ENCODE measurements at regions of chr19 and their contacts with region 1.

Region 1: DNA sequence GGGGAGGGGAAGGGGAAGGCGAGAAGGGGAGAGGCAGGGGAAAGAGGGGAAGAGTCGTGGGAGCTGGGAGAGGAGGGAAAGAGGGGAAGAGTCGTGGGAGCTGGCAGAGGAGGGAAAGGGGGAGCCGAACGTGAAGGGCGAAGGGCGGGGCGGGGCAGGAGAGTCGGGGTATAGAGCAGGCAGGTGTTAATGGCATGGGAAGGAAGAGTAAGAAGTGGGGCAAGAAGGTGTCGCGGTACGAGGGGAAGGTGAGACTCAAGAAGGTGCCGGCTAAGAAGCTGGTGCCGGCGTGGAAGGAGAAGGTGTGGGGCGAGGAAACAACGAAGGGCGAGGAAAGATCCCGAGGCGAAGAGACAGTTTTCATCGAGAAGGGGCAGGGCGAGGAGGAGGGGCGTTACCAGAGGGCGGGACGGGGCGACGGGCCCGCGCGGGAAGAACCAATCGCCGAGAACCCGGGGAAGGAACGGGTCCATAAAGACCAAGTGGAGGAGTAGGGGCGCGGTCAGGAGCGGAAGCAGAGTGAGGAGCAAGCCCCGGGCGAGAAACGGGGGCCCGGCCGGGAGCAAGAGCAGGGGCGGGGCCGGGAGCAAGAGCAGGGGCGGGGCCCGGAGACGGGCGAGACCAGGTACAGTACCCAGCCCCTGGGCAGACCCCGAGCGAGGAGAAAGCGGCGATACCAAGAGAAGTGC is 463 bp downstream of the CATSPERG start:
- DNase-seq: peak; percentile 98 to 99
- ATAC-seq: peak; percentile 96
- H3K4me3 ChIP-seq: peak overlapping the region; percentile 23 to 59
- H3K27ac ChIP-seq: peak overlapping the region in 1 of 2 donors; percentile 93
- H3K4me1 ChIP-seq: no peaks in the 10 kb centered on the region
- H3K27me3 ChIP-seq: no peaks in the 10 kb centered on the region

Region 2: GRCh38 chr19:38142176-38143035 is 193.7 kb before region 1 on chr19:
- intact Hi-C with region 1: loop called in 1 of 2 experiments (anchors 5 kb)
- DNase-seq: no peak
- ATAC-seq: peak; percentile 57
- H3K4me3 ChIP-seq: no peak overlapping the region
- H3K27ac ChIP-seq: no peak overlapping the region
- H3K4me1 ChIP-seq: no peaks in the 10 kb centered on the region
- H3K27me3 ChIP-seq: no peaks in the 10 kb centered on the region

Region 3: DNA sequence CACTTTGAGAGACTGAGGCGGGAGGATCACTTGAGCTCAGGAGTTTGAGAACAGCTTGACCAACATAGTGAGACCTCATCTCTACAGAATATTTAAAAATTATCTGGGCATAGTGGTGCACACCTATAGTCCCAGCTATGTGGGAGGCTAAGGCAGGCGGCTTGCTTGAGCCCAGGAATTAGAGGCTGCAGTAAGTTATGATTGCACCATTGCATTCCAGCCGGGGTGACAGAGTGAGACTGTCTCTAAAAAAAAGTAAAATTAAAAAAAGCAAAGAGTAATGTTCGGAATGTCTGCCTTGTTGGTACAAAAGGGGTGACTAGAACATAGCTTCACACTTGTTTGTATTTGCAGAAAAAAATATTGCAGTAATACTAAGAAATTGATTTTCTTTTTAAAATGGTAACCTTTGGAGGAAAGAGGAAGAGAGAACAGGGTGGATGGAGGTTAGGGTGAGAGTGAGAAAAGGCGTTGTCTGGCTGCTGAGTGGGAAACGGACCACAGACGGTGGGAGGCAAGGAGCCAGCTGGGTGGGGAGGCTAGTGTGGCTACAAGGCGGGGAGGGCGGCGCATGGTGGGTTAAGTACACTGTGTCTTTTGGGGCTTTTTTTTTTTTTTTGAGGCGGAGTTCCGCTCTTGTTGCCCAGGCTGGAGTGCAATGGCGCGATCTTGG is 90.1 kb before region 1 on chr19:
- intact Hi-C with region 1: loop called (anchors 1 to 5 kb)
- DNase-seq: peak; percentile 82 to 93
- ATAC-seq: peak; percentile 36
- H3K4me3 ChIP-seq: no peak overlapping the region
- H3K27ac ChIP-seq: peak overlapping the region; percentile 48 to 94
- H3K4me1 ChIP-seq: peaks cover 3% of the 10 kb centered on the region in 2 donors
- H3K27me3 ChIP-seq: no peaks in the 10 kb centered on the region

Region 4: GRCh38 chr19:38277969-38278680 is 58.0 kb before region 1 on chr19:
- intact Hi-C with region 1: no loop called
- DNase-seq: peak; percentile 88 to 92
- ATAC-seq: peak; percentile 69
- H3K4me3 ChIP-seq: no peak overlapping the region
- H3K27ac ChIP-seq: peak overlapping the region; percentile 83 to 96
- H3K4me1 ChIP-seq: peaks cover 0 to 3% of the 10 kb centered on the region in 2 donors
- H3K27me3 ChIP-seq: no peaks in the 10 kb centered on the region

Region 5: DNA sequence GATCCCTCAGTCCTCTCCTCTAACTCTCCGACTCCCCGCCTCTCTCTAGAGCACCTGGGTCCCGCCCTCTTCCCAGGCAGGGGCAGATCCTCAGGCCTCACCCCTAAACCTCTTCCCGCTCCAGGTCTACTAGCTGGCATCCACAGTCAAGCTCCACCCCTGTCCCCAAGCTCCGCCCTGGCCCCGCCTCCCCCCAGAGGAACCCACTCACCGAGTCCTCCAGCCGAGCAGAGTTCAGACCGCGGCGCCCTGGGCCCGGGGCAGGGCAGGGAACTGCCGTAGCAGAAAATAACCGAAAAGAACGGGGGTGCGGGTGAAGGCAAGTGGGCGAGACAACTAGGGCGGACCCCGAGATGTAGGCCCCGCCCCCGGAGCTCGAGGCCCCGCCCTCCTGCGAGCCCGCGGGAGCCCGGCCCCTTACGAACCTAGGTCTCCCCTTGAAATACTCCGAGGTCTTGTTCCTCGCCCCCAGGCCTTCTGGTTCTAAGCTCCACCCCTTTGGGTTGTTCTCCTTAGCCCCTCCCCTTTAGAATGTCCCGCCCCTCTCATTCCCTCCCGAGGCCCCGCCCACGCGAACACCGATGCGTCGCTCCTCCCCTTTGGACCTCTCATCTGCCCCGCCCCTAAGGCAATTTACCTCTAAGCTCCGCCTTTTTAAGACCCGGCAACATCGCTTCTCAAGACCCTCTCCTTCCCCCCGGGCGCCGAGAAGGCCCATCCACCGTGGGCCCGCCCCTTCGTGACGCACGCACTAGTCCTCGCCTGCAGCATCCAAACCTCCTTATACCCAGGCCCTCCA is 51.7 kb after region 1 on chr19 and contains the start of gene GGN:
- intact Hi-C with region 1: loop called in 1 of 2 experiments (anchors 5 kb)
- DNase-seq: peak; percentile 93 to 95
- ATAC-seq: peak; percentile 86
- H3K4me3 ChIP-seq: peak within 1 kb of the TSS; percentile 45 to 56
- H3K27ac ChIP-seq: peak within 1 kb of the TSS; percentile 20 to 73
- H3K4me1 ChIP-seq: no peaks in the 10 kb centered on the region
- H3K27me3 ChIP-seq: no peaks in the 10 kb centered on the region
- total RNA-seq, gene GGN: 3.3 to 4.7 TPM

Measured in aorta (tissue), 5 donors.